Activated CD8-positive, alpha-beta T cell treated with anti-CD3 and anti-CD28 coated beads for 36 hours (primary cell): ENCODE measurements at regions of chr3 and their contacts with region 1.

Region 1: DNA sequence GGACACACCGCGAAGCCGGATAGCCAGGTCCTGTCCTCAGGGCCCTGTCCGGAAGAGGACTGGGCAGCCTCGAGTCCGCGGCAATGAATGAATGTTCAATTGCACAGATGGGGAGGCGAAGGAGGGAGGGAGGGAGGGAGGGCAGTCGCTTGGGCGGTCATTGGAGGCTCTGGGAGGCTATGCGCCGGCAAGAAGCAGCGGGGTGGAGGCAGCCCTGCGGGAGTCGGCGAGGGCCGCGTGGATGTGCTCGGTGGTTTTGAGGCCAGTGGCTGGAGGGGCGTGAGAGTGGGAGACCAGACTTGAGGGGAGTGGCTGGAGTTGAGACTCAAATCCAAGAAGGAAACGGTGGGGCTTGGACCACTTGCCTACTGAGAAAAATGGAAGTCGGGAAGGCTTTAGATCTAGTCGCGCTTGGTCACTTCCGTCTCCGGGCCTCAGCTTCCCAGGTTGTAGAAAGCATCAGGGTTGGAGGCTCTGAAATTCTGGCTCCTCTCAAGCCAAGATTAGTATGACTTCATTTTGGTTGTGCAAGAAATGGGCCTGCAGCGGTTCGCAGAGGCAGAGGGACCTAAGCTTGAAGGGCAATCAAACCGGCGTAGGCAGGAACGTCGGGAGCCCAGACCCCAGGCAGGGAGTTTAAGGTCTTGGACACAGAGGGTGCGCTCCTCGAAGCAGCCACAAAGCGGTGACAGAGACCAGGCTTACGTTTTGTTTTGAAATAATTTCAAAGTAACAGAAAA is 21.1 kb upstream of the PLXND1 start:
- DNase-seq: peak; percentile 84
- ATAC-seq: peak; percentile 74
- H3K4me3 Mint-ChIP-seq: peak overlapping the region; percentile 96
- H3K27ac Mint-ChIP-seq: peak overlapping the region; percentile 84
- H3K4me1 Mint-ChIP-seq: peaks cover 17% of the 10 kb centered on the region
- H3K27me3 Mint-ChIP-seq: no peaks in the 10 kb centered on the region
- CTCF ChIP-seq: peak; percentile 68

Region 2: GRCh38 chr3:129490242-129491045 is 137.2 kb before region 1 on chr3:
- CTCF ChIA-PET with region 1: interaction called, 13 read pairs
- POLR2A ChIA-PET with region 1: no interaction called
- intact Hi-C with region 1: no loop called
- DNase-seq: peak; percentile 59
- ATAC-seq: peak; percentile 99
- H3K4me3 Mint-ChIP-seq: no peak overlapping the region
- H3K27ac Mint-ChIP-seq: no peak overlapping the region
- H3K4me1 Mint-ChIP-seq: no peaks in the 10 kb centered on the region
- H3K27me3 Mint-ChIP-seq: no peaks in the 10 kb centered on the region
- CTCF ChIP-seq: peak; percentile 76

Region 3: DNA sequence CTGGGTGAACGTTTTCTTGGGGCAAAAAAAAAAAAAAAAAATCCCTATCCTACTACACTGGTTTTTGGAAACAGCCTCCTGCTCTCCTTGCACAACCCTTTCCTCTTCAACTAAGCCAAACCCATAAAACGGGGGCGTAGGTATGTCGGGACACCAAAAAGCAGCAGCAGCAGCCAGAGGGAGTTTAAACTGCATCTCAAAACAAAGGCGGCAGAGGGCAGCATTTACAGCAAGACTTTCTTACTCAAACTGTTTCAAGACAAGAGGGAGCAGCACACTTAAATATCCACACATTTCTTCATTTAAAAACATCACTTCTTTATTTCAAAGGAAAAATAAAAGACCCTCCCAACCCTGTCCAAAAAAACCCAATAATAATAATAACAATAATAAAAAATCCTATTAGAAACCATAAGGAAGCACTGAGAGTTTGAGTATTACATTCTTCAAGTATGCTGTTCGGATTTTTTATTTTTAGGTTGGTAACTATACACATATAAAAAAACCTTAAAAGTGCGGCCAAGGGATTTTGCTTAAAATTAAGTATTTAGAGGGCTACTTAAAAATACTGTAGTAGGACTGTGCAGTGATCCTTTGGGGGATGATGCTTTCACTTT is 22.8 kb after region 1 on chr3:
- CTCF ChIA-PET with region 1: interaction called, 13 read pairs
- POLR2A ChIA-PET with region 1: no interaction called
- intact Hi-C with region 1: no loop called
- DNase-seq: peak; percentile 80
- ATAC-seq: peak; percentile 67
- H3K4me3 Mint-ChIP-seq: no peak overlapping the region
- H3K27ac Mint-ChIP-seq: no peak overlapping the region
- H3K4me1 Mint-ChIP-seq: peaks cover 4% of the 10 kb centered on the region
- H3K27me3 Mint-ChIP-seq: no peaks in the 10 kb centered on the region
- CTCF ChIP-seq: peak; percentile 71

Region 4: DNA sequence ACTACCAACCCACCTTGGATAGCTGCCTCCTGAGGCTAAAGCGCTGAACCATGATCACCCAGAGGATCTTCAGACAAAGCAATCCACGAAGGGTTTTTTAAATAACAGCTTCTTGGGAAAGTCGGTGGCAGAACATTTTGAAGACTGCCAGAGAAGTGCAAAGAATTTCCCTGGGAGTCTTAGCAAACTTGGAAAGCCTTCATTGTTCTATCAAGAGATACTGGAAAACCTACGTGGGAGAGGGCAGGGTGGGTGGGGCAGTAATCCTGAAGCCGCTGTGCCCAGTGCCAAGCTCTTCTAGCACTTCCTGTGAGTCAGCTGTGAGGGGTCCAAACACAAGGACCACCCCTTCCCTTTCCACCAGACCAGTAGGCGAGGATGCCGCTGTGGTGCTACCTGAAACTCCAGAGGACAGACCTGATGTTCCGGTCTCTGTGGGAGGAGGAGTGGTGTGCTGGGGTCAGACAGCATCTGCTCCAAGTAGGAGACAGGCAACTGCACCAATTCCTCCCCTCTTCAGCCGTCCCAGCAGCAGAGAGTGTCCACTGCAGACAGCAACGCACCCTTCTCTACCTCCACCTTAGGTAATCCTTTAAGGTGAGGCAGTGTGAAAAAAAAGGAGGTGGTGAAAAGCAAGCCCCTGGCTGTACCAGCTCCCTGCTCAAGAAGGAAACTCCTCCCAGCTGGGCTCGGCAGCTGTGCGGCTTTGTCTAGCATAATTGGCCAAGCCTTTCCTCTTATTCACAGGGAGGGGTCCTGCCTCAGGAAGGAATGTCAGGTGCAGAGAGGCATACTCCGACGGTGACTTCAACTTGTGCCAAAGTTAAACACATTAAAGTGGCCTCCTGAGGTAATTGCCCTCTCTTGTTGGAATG is 166.9 kb after region 1 on chr3:
- CTCF ChIA-PET with region 1: no interaction called
- POLR2A ChIA-PET with region 1: no interaction called
- intact Hi-C with region 1: no loop called
- DNase-seq: peak; percentile 18
- ATAC-seq: peak; percentile 45
- H3K4me3 Mint-ChIP-seq: no peak overlapping the region
- H3K27ac Mint-ChIP-seq: no peak overlapping the region
- H3K4me1 Mint-ChIP-seq: peaks cover 20% of the 10 kb centered on the region
- H3K27me3 Mint-ChIP-seq: no peaks in the 10 kb centered on the region
- CTCF ChIP-seq: no peak

Region 5: DNA sequence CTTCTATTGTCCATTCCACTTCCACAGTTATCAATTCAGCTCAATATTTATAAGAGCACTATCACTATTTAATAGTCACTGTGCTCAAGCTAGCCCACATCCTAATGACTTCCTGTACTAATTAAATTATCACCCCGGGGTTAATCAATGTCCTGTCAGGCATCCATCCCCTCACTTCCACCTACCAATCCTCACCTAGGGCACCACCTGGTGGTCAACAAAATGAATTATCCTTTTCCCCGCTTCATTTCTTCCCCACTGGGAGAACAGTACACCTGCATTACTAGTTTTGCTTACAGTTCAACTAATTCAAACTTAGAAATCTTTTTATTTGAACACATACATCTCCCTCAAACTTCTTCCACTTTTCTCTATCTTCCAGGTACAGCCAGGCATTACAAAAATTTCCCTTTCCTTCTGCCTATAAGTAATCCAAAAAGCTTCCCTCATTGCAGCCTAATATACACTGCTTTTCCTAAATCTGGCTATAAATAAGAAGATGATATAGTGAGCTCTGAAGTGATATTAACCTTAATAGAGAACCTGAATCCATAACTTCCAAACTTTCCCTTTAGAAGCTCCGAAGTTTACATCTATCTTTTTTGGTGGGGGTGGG is 197.4 kb after region 1 on chr3:
- CTCF ChIA-PET with region 1: interaction called, 29 read pairs
- POLR2A ChIA-PET with region 1: no interaction called
- intact Hi-C with region 1: loop called (anchors 5 kb)
- DNase-seq: peak; percentile 52
- ATAC-seq: peak; percentile 58
- H3K4me3 Mint-ChIP-seq: no peak overlapping the region
- H3K27ac Mint-ChIP-seq: no peak overlapping the region
- H3K4me1 Mint-ChIP-seq: peaks cover 15% of the 10 kb centered on the region
- H3K27me3 Mint-ChIP-seq: no peaks in the 10 kb centered on the region
- CTCF ChIP-seq: peak; percentile 82

Region 6: DNA sequence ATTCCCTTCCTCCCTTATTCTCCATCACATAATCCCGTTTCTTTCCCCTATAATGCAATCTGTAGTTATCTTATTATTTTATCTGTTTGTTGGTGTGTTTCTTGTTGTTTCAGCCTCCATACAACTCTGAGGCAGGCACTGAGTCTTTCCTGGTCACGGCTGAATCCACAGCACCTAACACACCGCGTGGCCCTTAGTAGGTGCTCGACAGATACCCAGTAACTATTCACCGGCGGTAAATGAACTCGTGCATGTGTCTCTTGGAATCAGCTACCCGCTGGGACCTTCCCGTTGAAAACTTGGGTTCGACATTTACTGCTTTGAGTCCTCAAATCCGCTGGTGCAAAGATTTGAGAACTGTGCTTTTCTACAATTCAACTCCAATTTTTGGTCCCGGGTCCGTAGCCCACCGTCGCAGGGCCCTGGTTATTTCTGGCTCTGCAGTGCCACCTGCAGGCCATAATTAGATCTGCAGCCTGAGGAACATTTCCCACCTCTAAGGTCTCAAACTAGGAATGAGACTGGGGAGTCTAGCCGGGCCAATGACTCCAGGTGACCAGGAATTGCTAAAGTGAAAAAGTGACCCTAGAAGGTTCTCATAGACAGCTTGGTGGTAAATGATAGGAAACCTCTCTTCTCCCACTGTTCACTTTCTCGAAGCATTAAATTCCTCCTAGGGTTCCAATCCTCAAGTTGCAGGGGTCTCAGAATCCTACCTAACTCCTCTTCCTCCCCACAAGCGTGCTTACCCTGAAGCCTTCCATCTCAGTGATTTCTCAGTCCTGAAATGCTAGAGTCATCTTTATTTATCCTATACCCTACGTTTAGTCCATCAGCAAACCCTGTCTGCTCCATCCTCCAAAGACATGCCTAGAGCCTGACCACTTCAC is 306.9 kb after region 1 on chr3:
- CTCF ChIA-PET with region 1: interaction called, 10 read pairs
- POLR2A ChIA-PET with region 1: no interaction called
- intact Hi-C with region 1: loop called (anchors 5 kb)
- DNase-seq: peak; percentile 48
- ATAC-seq: peak; percentile 61
- H3K4me3 Mint-ChIP-seq: no peak overlapping the region
- H3K27ac Mint-ChIP-seq: no peak overlapping the region
- H3K4me1 Mint-ChIP-seq: peaks cover 2% of the 10 kb centered on the region
- H3K27me3 Mint-ChIP-seq: no peaks in the 10 kb centered on the region
- CTCF ChIP-seq: peak; percentile 94

Region 7: DNA sequence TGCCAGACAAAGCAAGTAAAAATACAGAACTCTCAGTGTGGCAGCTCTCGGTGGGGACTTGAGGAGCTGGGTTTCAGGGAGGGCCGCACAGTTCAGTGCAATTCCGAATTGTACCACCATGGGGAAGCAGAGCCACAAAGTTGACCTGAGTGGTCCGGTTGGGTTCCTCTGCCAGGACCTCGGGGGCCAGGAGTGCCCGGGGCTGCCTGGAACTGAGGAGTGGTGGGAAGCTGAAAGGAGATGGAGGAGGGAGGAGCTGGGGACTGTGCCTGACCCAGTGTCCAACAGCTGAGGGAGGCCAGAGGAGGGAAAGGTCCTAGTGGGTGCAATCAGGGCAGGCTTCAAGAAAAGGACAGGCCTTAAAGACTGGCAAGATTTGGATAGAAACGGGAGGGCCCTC is 314.7 kb after region 1 on chr3:
- CTCF ChIA-PET with region 1: interaction called, 17 read pairs
- POLR2A ChIA-PET with region 1: no interaction called
- intact Hi-C with region 1: no loop called
- DNase-seq: peak; percentile 66
- ATAC-seq: peak; percentile 92
- H3K4me3 Mint-ChIP-seq: no peak overlapping the region
- H3K27ac Mint-ChIP-seq: no peak overlapping the region
- H3K4me1 Mint-ChIP-seq: no peaks in the 10 kb centered on the region
- H3K27me3 Mint-ChIP-seq: peaks cover 3% of the 10 kb centered on the region
- CTCF ChIP-seq: peak; percentile 64